G401 (cell line): ENCODE measurements at regions of chr1 and their contacts with region 1.

Region 1: GRCh38 chr1:85328713-85329376 is 52.4 kb upstream of the BCL10 start:
- DNase-seq: no peak

Region 2: DNA sequence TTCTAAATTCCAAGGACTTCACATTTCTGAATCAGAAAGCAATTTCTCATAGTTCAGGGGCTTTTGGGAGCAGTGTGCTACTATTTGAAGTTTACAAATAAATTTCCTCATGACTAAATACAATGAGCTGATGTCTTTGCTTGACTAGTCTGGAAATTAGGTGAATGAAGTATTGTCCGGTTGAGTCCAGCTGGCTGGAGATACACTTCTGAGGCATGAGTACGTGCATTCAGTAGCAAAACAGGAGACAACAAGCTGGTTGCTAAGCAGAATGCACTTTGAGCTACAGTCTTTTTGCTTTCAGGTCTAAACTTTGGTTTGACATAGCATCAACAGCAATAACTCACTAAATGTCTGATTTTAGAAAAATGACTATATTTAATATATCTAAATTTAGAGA is 352.2 kb after region 1 on chr1:
- in situ Hi-C with region 1: loop called (anchors 10 kb)
- DNase-seq: no peak